ENCODE measurements at regions of chr4 and their contacts with region 1.

Region 1: GRCh38 chr4:112099701-112100297 is 45.5 kb upstream of the FAM241A start:
- DNase-seq: no peak
- ATAC-seq: peak; percentile 80
- H3K4me3 Mint-ChIP-seq: no peak overlapping the region
- H3K27ac Mint-ChIP-seq: no peak overlapping the region
- H3K4me1 Mint-ChIP-seq: no peaks in the 10 kb centered on the region
- H3K27me3 Mint-ChIP-seq: peaks cover 12% of the 10 kb centered on the region

Region 2: GRCh38 chr4:111234939-111235338 is 864.9 kb before region 1 on chr4:
- CTCF ChIA-PET with region 1: no interaction called
- POLR2A ChIA-PET with region 1: no interaction called
- intact Hi-C with region 1: no loop called
- DNase-seq: no peak
- ATAC-seq: no peak
- H3K4me3 Mint-ChIP-seq: no peak overlapping the region
- H3K27ac Mint-ChIP-seq: no peak overlapping the region
- H3K4me1 Mint-ChIP-seq: no peaks in the 10 kb centered on the region
- H3K27me3 Mint-ChIP-seq: no peaks in the 10 kb centered on the region

Region 3: DNA sequence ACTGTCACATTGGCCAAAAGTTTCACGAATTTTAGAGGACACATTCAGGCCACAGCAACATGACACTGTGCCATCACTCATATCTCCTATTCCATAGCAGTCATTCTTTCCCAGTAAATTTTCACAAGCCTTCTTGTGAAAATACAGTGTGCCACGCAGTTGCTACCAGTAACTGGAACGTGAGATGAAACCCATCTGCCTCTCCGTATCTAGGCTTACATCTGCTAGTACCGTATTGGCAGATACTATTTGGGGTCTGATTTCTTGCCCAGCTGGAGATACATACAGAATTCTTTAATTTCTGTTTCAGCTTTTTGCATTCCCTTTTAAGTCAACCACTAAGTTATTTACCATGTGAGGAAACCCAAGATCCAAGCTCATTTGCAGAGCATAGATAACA is 36.8 kb after region 1 on chr4:
- CTCF ChIA-PET with region 1: interaction called, 20 read pairs
- POLR2A ChIA-PET with region 1: no interaction called
- intact Hi-C with region 1: no loop called
- DNase-seq: no peak
- ATAC-seq: no peak
- H3K4me3 Mint-ChIP-seq: no peak overlapping the region
- H3K27ac Mint-ChIP-seq: no peak overlapping the region
- H3K4me1 Mint-ChIP-seq: no peaks in the 10 kb centered on the region
- H3K27me3 Mint-ChIP-seq: peaks cover 3% of the 10 kb centered on the region

Region 4: GRCh38 chr4:112321776-112322684 is 222.2 kb after region 1 on chr4:
- CTCF ChIA-PET with region 1: interaction called, 3 read pairs
- POLR2A ChIA-PET with region 1: no interaction called
- intact Hi-C with region 1: loop called (anchors 1 to 5 kb)
- DNase-seq: peak; percentile 89
- ATAC-seq: peak; percentile 75
- H3K4me3 Mint-ChIP-seq: no peak overlapping the region
- H3K27ac Mint-ChIP-seq: no peak overlapping the region
- H3K4me1 Mint-ChIP-seq: peaks cover 11% of the 10 kb centered on the region
- H3K27me3 Mint-ChIP-seq: no peaks in the 10 kb centered on the region

Region 5: DNA sequence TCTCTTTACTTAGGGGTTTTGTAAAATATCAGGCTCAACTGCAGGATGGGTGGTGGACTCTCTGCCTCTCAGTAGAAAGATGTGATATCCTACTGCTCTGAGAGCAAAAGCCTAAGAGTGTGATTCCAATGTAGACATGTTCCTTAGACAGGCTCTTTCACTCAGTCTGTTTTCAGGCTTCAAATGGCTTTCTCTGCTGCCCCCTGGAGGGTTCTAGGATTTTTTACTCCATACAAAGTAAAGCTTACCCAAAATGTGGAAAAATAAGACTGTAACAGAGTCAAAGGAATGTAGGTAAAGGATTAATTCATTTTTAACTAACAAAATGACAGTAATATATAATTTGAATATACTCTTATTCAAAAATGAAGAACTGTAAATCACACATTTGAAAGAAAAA is 504.8 kb after region 1 on chr4:
- CTCF ChIA-PET with region 1: no interaction called
- POLR2A ChIA-PET with region 1: no interaction called
- intact Hi-C with region 1: loop called in 1 of 2 experiments (anchors 10 kb)
- DNase-seq: peak; percentile 39
- ATAC-seq: peak; percentile 42
- H3K4me3 Mint-ChIP-seq: no peak overlapping the region
- H3K27ac Mint-ChIP-seq: no peak overlapping the region
- H3K4me1 Mint-ChIP-seq: no peaks in the 10 kb centered on the region
- H3K27me3 Mint-ChIP-seq: no peaks in the 10 kb centered on the region

Region 6: DNA sequence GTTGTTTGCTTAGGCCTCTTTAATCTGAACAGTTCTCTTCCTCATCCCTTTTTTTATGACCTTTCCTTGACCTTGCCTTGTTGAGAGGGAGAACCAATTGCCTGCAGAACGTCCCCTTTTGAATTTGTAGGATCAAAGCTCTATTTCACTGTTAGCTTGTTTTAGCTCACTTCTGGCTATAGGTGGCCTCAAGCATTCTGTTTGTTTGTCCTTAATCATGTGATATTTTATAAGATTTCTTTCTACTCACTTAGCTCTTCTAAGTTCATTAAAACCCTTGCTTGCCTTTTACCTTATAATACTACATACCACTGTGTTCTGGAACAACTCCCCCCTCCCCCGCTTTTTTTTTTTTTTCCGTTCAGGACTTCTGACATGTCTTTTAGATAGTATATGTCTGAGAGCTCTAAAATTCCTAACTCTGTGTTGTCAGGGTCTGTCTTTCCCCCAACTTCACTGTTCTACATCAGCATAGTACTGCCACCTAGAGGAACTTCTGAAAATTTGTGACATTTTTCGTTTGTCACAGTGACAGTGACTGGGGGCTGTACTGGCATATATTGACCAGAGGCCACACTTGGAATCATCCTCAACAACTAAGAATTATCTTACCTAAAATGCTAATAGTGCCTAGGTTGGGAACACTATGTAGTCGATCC is 665.6 kb after region 1 on chr4:
- CTCF ChIA-PET with region 1: no interaction called
- POLR2A ChIA-PET with region 1: no interaction called
- intact Hi-C with region 1: loop called in 1 of 2 experiments (anchors 5 kb)
- DNase-seq: peak; percentile 11
- ATAC-seq: peak; percentile 60
- H3K4me3 Mint-ChIP-seq: no peak overlapping the region
- H3K27ac Mint-ChIP-seq: no peak overlapping the region
- H3K4me1 Mint-ChIP-seq: no peaks in the 10 kb centered on the region
- H3K27me3 Mint-ChIP-seq: peaks cover 4% of the 10 kb centered on the region

Region 7: GRCh38 chr4:112938461-112939058 is 838.8 kb after region 1 on chr4:
- CTCF ChIA-PET with region 1: no interaction called
- POLR2A ChIA-PET with region 1: no interaction called
- intact Hi-C with region 1: loop called in 1 of 2 experiments (anchors 10 kb)
- DNase-seq: no peak
- ATAC-seq: no peak
- H3K4me3 Mint-ChIP-seq: no peak overlapping the region
- H3K27ac Mint-ChIP-seq: no peak overlapping the region
- H3K4me1 Mint-ChIP-seq: no peaks in the 10 kb centered on the region
- H3K27me3 Mint-ChIP-seq: peaks cover 8% of the 10 kb centered on the region